Endothelial cell of umbilical vein (primary cell): ENCODE measurements at regions of chr5 and their contacts with region 1.

Region 1: GRCh38 chr5:172071289-172071875 is 64.9 kb upstream of the FBXW11 start:
- DNase-seq: no peak
- H3K4me3 ChIP-seq: no peak overlapping the region
- H3K27ac ChIP-seq: no peak overlapping the region
- H3K4me1 ChIP-seq: no peaks in the 10 kb centered on the region
- H3K27me3 ChIP-seq: no peaks in the 10 kb centered on the region
- CTCF ChIP-seq: no peak
- POLR2A ChIP-seq: no peak

Region 2: GRCh38 chr5:171984748-171985419 is 86.5 kb before region 1 on chr5:
- CTCF ChIA-PET with region 1: no interaction called
- POLR2A ChIA-PET with region 1: no interaction called
- dilution Hi-C with region 1: no loop called
- intact Hi-C with region 1: no loop called
- DNase-seq: peak; percentile 63
- H3K4me3 ChIP-seq: no peak overlapping the region
- H3K27ac ChIP-seq: peak overlapping the region; percentile 6
- H3K4me1 ChIP-seq: peaks cover 11% of the 10 kb centered on the region
- H3K27me3 ChIP-seq: no peaks in the 10 kb centered on the region
- CTCF ChIP-seq: no peak
- POLR2A ChIP-seq: no peak

Region 3: DNA sequence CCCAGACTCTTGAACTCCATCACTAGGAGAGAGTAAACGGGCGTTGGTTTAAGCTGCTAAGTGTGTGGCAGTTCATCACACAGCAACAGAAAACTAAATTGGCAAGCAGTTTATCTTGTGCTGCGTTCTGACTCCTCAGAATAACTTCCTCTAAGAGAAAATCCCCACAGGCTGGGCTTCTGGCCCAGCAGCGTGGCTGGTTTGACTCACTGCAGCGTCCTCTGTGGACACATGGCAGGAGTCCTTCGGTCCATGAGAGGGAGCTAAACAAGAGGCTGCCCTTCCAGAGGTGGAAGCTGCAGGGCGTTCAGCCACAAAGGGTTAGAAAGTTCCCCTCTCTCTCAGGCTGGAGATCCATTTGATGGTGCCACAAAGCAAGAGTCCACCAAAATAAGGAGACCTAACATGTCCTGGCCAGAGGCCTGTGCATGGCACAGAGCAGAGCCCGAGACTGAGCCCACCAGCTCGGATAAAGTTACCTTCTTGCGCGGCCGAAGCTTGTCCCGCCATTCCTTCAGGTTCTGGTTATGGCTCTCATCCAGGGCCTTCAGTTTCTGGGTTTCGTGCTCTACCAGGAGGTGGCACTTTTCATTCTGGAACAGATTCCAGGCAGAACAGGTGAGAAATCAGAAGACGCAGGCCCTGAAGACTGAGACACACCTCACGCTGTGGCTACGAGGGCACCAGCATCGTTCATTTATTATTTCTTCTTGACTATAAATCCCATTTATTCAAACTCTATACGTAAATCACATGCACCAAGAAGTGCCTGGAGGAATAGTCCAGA is 18.7 kb before region 1 on chr5:
- CTCF ChIA-PET with region 1: interaction called, 10 read pairs
- POLR2A ChIA-PET with region 1: no interaction called
- dilution Hi-C with region 1: no loop called
- intact Hi-C with region 1: no loop called
- DNase-seq: peak; percentile 46
- H3K4me3 ChIP-seq: no peak overlapping the region
- H3K27ac ChIP-seq: no peak overlapping the region
- H3K4me1 ChIP-seq: peaks cover 16% of the 10 kb centered on the region
- H3K27me3 ChIP-seq: no peaks in the 10 kb centered on the region
- CTCF ChIP-seq: no peak
- POLR2A ChIP-seq: no peak